ENCODE measurements at regions of chr1 and their contacts with region 1.

Region 1: GRCh38 chr1:226051356-226051755 is 11.2 kb upstream of the H3-3A start:
- DNase-seq: no peak
- ATAC-seq: no peak
- H3K4me3 ChIP-seq: no peak overlapping the region
- H3K27ac ChIP-seq: no peak overlapping the region
- H3K4me1 ChIP-seq: peaks cover 0 to 15% (median 0%) of the 10 kb centered on the region in 12 donors
- H3K27me3 ChIP-seq: no peaks in the 10 kb centered on the region
- CTCF ChIP-seq: no peak
- POLR2A ChIP-seq: no peak

Region 2: DNA sequence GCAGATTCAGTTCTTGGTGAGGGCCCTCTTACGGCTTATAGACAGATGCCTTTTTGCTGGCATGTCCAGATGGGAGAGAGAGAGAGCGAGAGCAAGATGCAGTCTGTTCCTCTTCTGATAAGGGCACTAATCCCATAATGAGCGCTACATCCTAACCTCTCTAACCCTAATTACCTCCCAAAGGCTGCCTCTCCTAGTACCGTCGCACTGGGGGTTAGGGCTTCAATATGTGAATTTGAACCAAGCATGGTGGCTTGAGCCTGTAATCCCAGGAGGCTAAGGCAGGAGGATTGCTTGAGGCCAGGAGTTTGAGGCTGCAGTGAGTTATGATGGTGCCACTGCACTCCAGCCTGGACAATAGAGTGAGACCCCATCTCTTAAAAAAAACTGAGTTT is 41.7 kb before region 1 on chr1:
- intact Hi-C with region 1: loop called in 2 of 10 experiments (anchors 2 to 5 kb)
- DNase-seq: no peak
- ATAC-seq: no peak
- H3K4me3 ChIP-seq: no peak overlapping the region
- H3K27ac ChIP-seq: no peak overlapping the region
- H3K4me1 ChIP-seq: peaks cover 0 to 3% (median 0%) of the 10 kb centered on the region in 12 donors
- H3K27me3 ChIP-seq: no peaks in the 10 kb centered on the region
- CTCF ChIP-seq: no peak
- POLR2A ChIP-seq: no peak

Measured in heart left ventricle (tissue), 16 donors.